ENCODE measurements at regions of chr1 and their contacts with region 1.

Region 1: DNA sequence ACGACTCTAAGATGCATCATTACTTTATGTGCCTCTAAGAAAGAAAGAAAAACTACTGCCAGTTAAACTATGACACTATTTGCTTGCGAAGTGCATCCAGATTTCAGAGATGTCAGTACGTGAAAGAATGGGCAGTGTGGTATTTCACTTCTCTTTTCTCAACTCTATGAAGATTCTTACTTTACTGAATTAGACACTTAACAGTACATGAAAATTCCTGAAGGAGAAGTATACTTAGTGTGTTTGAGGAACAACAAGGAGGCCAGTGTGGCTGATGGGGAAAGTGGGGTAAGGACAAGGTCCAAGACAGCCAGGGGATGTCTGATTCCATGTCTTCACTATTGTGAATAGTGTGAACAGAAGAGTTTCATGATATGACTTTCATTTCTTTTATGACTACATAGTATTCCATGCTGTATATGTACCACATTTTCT is 53.9 kb upstream of the HSD17B7 start:
- DNase-seq: no peak
- ATAC-seq: no peak
- H3K4me3 ChIP-seq: no peak overlapping the region
- H3K27ac ChIP-seq: no peak overlapping the region
- H3K4me1 ChIP-seq: peaks cover 0 to 35% (median 15%) of the 10 kb centered on the region in 9 donors
- H3K27me3 ChIP-seq: no peaks in the 10 kb centered on the region
- CTCF ChIP-seq: no peak

Region 2: DNA sequence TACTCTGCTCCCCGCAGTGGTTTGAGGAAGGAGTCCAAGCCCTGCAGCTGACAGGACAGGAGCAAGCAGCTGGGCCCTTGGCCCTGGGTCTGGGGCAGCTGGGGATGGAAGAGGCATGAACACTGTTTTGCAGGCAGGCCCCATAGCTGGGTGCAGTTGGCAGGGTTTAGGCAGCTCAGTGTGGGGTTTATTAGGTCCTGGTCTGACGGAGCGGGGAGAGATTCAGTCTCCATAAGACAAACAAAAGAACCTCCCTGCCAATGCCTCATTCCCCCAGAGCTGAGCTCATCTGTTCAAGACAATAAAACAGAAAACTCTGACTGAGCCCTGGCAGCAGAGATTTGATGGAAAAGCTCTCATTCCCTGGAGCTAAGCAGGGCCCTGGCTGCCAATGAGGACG is 750.3 kb before region 1 on chr1:
- intact Hi-C with region 1: no loop called
- DNase-seq: no peak
- ATAC-seq: peak in 3 of 8 donors; percentile 19 to 39 (median 30)
- H3K4me3 ChIP-seq: no peak overlapping the region
- H3K27ac ChIP-seq: no peak overlapping the region
- H3K4me1 ChIP-seq: peaks cover 0 to 15% (median 0%) of the 10 kb centered on the region in 9 donors
- H3K27me3 ChIP-seq: no peaks in the 10 kb centered on the region
- CTCF ChIP-seq: no peak

Region 3: DNA sequence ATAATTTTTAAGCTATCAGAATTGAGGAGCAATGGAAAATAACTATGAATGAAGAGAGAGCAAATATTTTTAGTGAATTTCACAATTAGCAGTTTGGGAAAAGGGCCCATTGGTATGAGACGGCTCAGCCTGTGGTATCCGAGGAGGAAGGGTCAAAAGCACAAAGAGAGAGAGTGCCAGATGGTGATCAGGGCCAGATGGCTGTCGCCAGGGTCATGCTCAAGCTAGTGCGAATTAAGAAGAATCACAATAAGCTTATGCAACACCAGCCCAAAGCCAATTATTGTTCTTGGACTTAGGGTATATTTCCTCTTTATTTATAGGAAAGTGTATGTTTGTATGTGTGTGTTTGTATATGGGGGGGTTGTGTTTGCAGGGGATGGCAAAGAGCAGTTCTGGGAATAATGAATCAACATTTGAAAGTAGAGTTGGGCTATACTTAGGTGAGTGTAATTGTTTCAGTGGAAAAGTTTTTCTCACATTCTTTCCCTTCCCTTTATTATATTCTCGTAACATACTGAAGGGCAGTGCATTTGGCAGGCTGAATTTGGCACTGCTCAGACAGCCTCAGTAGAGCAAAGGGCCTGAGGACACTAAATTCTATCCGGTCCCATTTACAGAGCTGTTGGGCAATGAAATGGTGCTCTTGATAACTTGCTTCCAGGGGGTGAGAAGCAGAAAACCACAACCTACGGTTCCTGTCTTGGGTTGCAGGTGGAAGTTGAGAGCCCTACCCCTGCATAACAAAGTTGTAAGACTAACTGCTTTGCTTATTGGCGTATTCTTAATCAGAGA is 123.8 kb before region 1 on chr1:
- intact Hi-C with region 1: loop called in 1 of 10 experiments (anchors 5 kb)
- DNase-seq: peak in 1 of 2 donors; percentile 28
- ATAC-seq: peak in 7 of 8 donors; percentile 33 to 77 (median 41)
- H3K4me3 ChIP-seq: no peak overlapping the region
- H3K27ac ChIP-seq: peak overlapping the region in 5 of 10 donors; percentile 3 to 58 (median 44)
- H3K4me1 ChIP-seq: peaks cover 0 to 17% (median 10%) of the 10 kb centered on the region in 9 donors
- H3K27me3 ChIP-seq: no peaks in the 10 kb centered on the region
- CTCF ChIP-seq: no peak

Region 4: GRCh38 chr1:162639718-162640117 is 96.9 kb before region 1 on chr1:
- intact Hi-C with region 1: loop called in 3 of 10 experiments (anchors 5 kb)
- DNase-seq: no peak
- ATAC-seq: no peak
- H3K4me3 ChIP-seq: no peak overlapping the region
- H3K27ac ChIP-seq: no peak overlapping the region
- H3K4me1 ChIP-seq: peaks cover 0 to 20% (median 7%) of the 10 kb centered on the region in 9 donors
- H3K27me3 ChIP-seq: no peaks in the 10 kb centered on the region
- CTCF ChIP-seq: no peak

Region 5: GRCh38 chr1:163263818-163264217 is 527.2 kb after region 1 on chr1:
- intact Hi-C with region 1: loop called in 1 of 10 experiments (anchors 10 kb)
- DNase-seq: no peak
- ATAC-seq: no peak
- H3K4me3 ChIP-seq: no peak overlapping the region
- H3K27ac ChIP-seq: no peak overlapping the region
- H3K4me1 ChIP-seq: peaks cover 0 to 1% (median 0%) of the 10 kb centered on the region in 9 donors
- H3K27me3 ChIP-seq: no peaks in the 10 kb centered on the region
- CTCF ChIP-seq: no peak

Measured in heart right ventricle (tissue), 16 donors.